Natural killer cell (primary cell): ENCODE measurements at regions of chr3 and their contacts with region 1.

Region 1: GRCh38 chr3:129439817-129440617 is at the starts of genes IFT122 and MBD4:
- DNase-seq: peak; percentile 98 to 100
- ATAC-seq: peak; percentile 83 to 95 (median 87)
- H3K4me3 ChIP-seq: peak within 1 kb of the TSS; percentile 74
- H3K4me3 Mint-ChIP-seq: peak within 1 kb of the TSS; percentile 94
- H3K27ac ChIP-seq: peak within 1 kb of the TSS; percentile 87
- H3K27ac Mint-ChIP-seq: peak within 1 kb of the TSS; percentile 94 to 98
- H3K4me1 ChIP-seq: peaks cover 16% of the 10 kb centered on the region
- H3K4me1 Mint-ChIP-seq: peaks cover 58 to 67% of the 10 kb centered on the region in 2 donors
- H3K27me3 ChIP-seq: no peaks in the 10 kb centered on the region
- H3K27me3 Mint-ChIP-seq: no peaks in the 10 kb centered on the region
- CTCF ChIP-seq: no peak
- total RNA-seq, gene IFT122: 20.7 to 26.6 (median 23.9) TPM
- total RNA-seq, gene MBD4: 46.4 to 55.6 (median 48.0) TPM

Region 2: DNA sequence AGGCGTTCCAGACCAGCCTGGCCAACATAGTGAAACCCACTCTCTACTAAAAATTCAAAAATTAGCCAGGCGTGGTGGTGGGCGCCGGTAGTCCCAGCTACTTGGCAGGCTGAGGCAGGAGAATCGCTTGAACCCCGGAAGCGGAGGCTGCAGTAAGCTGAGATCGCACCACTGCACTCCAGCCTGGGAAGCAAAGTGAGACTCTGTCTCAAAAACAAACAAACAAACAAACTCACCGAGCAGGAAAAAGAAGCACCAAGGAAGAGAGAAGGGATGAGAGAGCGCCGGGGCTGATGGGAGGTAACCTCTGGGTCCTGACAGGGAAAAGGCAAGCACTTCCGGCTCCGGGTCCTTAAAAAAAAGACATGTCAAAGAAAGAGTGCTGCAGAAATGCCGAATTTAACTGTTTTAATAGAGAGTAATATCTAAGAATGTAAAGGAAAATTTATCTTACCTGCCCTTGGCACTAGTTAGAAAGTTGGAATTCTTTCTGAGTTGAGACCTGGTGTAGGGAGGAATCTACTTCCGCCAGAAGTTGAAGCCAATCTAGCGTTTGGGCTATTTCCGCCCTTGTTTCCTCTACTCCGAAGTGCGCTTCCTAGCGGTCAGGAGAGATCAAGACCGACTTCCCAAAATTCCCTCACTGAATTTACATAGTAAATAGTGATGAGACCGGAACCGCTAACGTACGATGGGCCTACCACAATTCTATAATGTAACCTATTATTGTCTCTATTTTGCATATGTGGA is 40.7 kb before region 1 on chr3:
- intact Hi-C with region 1: loop called (anchors 1 kb)
- DNase-seq: peak; percentile 53 to 95
- ATAC-seq: peak; percentile 89 to 91 (median 89)
- H3K4me3 ChIP-seq: peak overlapping the region; percentile 96
- H3K4me3 Mint-ChIP-seq: peak overlapping the region; percentile 97
- H3K27ac ChIP-seq: peak overlapping the region; percentile 81
- H3K27ac Mint-ChIP-seq: peak overlapping the region; percentile 93 to 98
- H3K4me1 ChIP-seq: peaks cover 18% of the 10 kb centered on the region
- H3K4me1 Mint-ChIP-seq: peaks cover 25 to 50% of the 10 kb centered on the region in 2 donors
- H3K27me3 ChIP-seq: no peaks in the 10 kb centered on the region
- H3K27me3 Mint-ChIP-seq: no peaks in the 10 kb centered on the region
- CTCF ChIP-seq: peak; percentile 91

Region 3: GRCh38 chr3:129428376-129429079 is 11.5 kb before region 1 on chr3 and contains the start of gene EFCAB12:
- intact Hi-C with region 1: loop called (anchors 1 kb)
- DNase-seq: peak; percentile 87 to 94
- ATAC-seq: peak; percentile 94 to 99 (median 98)
- H3K4me3 ChIP-seq: peak within 1 kb of the TSS; percentile 38
- H3K4me3 Mint-ChIP-seq: peak within 1 kb of the TSS; percentile 84
- H3K27ac ChIP-seq: peak within 1 kb of the TSS; percentile 1
- H3K27ac Mint-ChIP-seq: peak within 1 kb of the TSS; percentile 43 to 67
- H3K4me1 ChIP-seq: peaks cover 22% of the 10 kb centered on the region
- H3K4me1 Mint-ChIP-seq: peaks cover 26 to 38% of the 10 kb centered on the region in 2 donors
- H3K27me3 ChIP-seq: no peaks in the 10 kb centered on the region
- H3K27me3 Mint-ChIP-seq: no peaks in the 10 kb centered on the region
- CTCF ChIP-seq: no peak
- total RNA-seq, gene EFCAB12: 0.94 to 3.3 (median 1.4) TPM

Region 4: GRCh38 chr3:129453732-129454131 is 13.7 kb after region 1 on chr3:
- intact Hi-C with region 1: no loop called
- DNase-seq: no peak
- ATAC-seq: no peak
- H3K4me3 ChIP-seq: no peak overlapping the region
- H3K4me3 Mint-ChIP-seq: no peak overlapping the region
- H3K27ac ChIP-seq: no peak overlapping the region
- H3K27ac Mint-ChIP-seq: no peak overlapping the region
- H3K4me1 ChIP-seq: no peaks in the 10 kb centered on the region
- H3K4me1 Mint-ChIP-seq: peaks cover 0 to 5% of the 10 kb centered on the region in 2 donors
- H3K27me3 ChIP-seq: no peaks in the 10 kb centered on the region
- H3K27me3 Mint-ChIP-seq: no peaks in the 10 kb centered on the region
- CTCF ChIP-seq: no peak

Region 5: GRCh38 chr3:129893581-129894070 is 453.6 kb after region 1 on chr3 and contains the start of gene TMCC1:
- intact Hi-C with region 1: loop called (anchors 2 kb)
- DNase-seq: peak; percentile 88 to 97
- ATAC-seq: peak; percentile 90 to 97 (median 92)
- H3K4me3 ChIP-seq: peak within 1 kb of the TSS; percentile 65
- H3K4me3 Mint-ChIP-seq: peak within 1 kb of the TSS; percentile 89
- H3K27ac ChIP-seq: peak within 1 kb of the TSS; percentile 80
- H3K27ac Mint-ChIP-seq: peak within 1 kb of the TSS; percentile 81 to 84
- H3K4me1 ChIP-seq: peaks cover 16% of the 10 kb centered on the region
- H3K4me1 Mint-ChIP-seq: peaks cover 37 to 39% of the 10 kb centered on the region in 2 donors
- H3K27me3 ChIP-seq: no peaks in the 10 kb centered on the region
- H3K27me3 Mint-ChIP-seq: no peaks in the 10 kb centered on the region
- CTCF ChIP-seq: no peak
- total RNA-seq, gene TMCC1: 26.4 to 36.7 (median 31.7) TPM